B cell (primary cell): ENCODE measurements at regions of chr2 and their contacts with region 1.

Region 1: GRCh38 chr2:164810843-164811242 is 30.8 kb downstream of the COBLL1 start:
- DNase-seq: no peak
- ATAC-seq: no peak
- H3K4me3 ChIP-seq: no peak overlapping the region
- H3K4me3 Mint-ChIP-seq: no peak overlapping the region
- H3K27ac ChIP-seq: no peak overlapping the region
- H3K27ac Mint-ChIP-seq: no peak overlapping the region
- H3K4me1 ChIP-seq: peaks cover 5 to 12% of the 10 kb centered on the region in 2 donors
- H3K4me1 Mint-ChIP-seq: peaks cover 20% of the 10 kb centered on the region
- H3K27me3 ChIP-seq: no peaks in the 10 kb centered on the region
- H3K27me3 Mint-ChIP-seq: no peaks in the 10 kb centered on the region
- CTCF ChIP-seq: no peak

Region 2: DNA sequence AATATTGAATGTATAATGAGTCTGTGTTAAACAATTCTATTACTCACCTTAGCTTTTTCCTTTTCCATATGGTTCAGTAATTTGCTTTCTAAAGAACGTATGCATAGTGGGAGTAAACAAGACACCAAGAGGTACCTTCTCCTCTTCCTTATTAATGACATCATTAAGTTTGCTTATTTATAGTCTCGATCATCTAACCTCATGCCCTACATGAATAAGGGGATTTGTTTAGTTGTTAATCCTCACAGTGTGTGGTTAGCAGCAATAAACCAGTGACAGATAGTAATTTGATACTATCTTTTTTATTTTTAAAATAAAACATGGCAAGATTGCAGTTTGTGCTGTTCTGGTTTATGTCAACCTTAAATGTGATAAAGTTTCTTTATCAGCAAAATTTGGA is 38.9 kb before region 1 on chr2:
- CTCF ChIA-PET with region 1: no interaction called
- POLR2A ChIA-PET with region 1: no interaction called
- intact Hi-C with region 1: loop called (anchors 5 kb)
- DNase-seq: no peak
- ATAC-seq: no peak
- H3K4me3 ChIP-seq: no peak overlapping the region
- H3K4me3 Mint-ChIP-seq: no peak overlapping the region
- H3K27ac ChIP-seq: no peak overlapping the region
- H3K27ac Mint-ChIP-seq: no peak overlapping the region
- H3K4me1 ChIP-seq: no peaks in the 10 kb centered on the region
- H3K4me1 Mint-ChIP-seq: peaks cover 7% of the 10 kb centered on the region
- H3K27me3 ChIP-seq: no peaks in the 10 kb centered on the region
- H3K27me3 Mint-ChIP-seq: no peaks in the 10 kb centered on the region
- CTCF ChIP-seq: no peak

Region 3: DNA sequence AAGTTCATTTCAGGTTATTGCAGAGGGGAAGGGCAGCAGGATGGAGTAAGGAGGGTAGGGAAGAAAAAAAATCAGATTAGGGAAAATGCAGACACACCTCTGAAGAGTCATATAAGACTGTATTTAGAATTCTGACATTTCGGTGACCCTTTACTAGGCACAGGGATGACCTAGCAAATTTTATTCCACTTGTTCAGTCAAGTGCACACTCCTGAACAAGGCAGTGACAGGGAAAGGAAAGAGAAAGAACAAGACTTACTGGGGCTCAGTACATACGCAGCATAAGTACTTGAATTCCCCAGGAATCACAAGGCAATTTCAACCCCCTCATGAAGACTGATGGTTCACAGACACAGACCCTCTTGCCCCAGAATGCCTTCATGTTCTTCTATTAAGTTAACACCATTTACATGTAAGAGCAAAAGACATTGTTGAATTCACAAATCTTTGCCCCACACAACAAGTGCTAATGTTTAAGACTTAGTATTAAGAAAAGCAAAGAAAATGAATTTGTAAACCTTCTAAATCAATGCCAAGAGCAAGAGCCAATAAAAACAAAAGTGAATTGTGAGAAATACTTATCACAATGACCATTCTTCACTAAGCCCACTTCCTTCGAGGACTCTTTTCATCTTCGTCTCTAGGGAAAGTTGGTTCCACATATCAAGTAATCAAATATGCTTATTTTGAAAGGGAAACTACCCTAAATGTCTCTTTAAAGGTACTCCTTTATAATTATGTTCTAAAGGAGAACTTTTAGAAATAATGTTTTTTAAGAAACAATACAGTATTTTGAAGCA is 16.2 kb before region 1 on chr2:
- CTCF ChIA-PET with region 1: interaction called, 3 read pairs
- POLR2A ChIA-PET with region 1: interaction called, 6 read pairs
- intact Hi-C with region 1: loop called (anchors 2 kb)
- DNase-seq: no peak
- ATAC-seq: no peak
- H3K4me3 ChIP-seq: peak overlapping the region in 1 of 5 experiments; percentile 21
- H3K4me3 Mint-ChIP-seq: peak overlapping the region; percentile 9
- H3K27ac ChIP-seq: no peak overlapping the region
- H3K27ac Mint-ChIP-seq: no peak overlapping the region
- H3K4me1 ChIP-seq: peaks cover 11 to 29% of the 10 kb centered on the region in 2 donors
- H3K4me1 Mint-ChIP-seq: peaks cover 35% of the 10 kb centered on the region
- H3K27me3 ChIP-seq: no peaks in the 10 kb centered on the region
- H3K27me3 Mint-ChIP-seq: no peaks in the 10 kb centered on the region
- CTCF ChIP-seq: no peak

Region 4: GRCh38 chr2:165044505-165045303 is 233.9 kb after region 1 on chr2:
- CTCF ChIA-PET with region 1: no interaction called
- POLR2A ChIA-PET with region 1: no interaction called
- intact Hi-C with region 1: no loop called
- DNase-seq: no peak
- ATAC-seq: no peak
- H3K4me3 ChIP-seq: no peak overlapping the region
- H3K4me3 Mint-ChIP-seq: no peak overlapping the region
- H3K27ac ChIP-seq: no peak overlapping the region
- H3K27ac Mint-ChIP-seq: no peak overlapping the region
- H3K4me1 ChIP-seq: no peaks in the 10 kb centered on the region
- H3K4me1 Mint-ChIP-seq: no peaks in the 10 kb centered on the region
- H3K27me3 ChIP-seq: peaks cover 0 to 3% (median 0%) of the 10 kb centered on the region in 4 experiments
- H3K27me3 Mint-ChIP-seq: peaks cover 16% of the 10 kb centered on the region
- CTCF ChIP-seq: no peak

Region 5: GRCh38 chr2:166148500-166149400 is 1337.9 kb after region 1 on chr2:
- CTCF ChIA-PET with region 1: no interaction called
- POLR2A ChIA-PET with region 1: no interaction called
- intact Hi-C with region 1: no loop called
- DNase-seq: no peak
- ATAC-seq: no peak
- H3K4me3 ChIP-seq: no peak overlapping the region
- H3K4me3 Mint-ChIP-seq: no peak overlapping the region
- H3K27ac ChIP-seq: no peak overlapping the region
- H3K27ac Mint-ChIP-seq: no peak overlapping the region
- H3K4me1 ChIP-seq: no peaks in the 10 kb centered on the region
- H3K4me1 Mint-ChIP-seq: no peaks in the 10 kb centered on the region
- H3K27me3 ChIP-seq: no peaks in the 10 kb centered on the region
- H3K27me3 Mint-ChIP-seq: peaks cover 4% of the 10 kb centered on the region
- CTCF ChIP-seq: no peak